ENCODE measurements at regions of chr20 and their contacts with region 1.

Region 1: GRCh38 chr20:49338061-49338460 is 60.2 kb upstream of the ZNFX1 start:
- DNase-seq: no peak
- ATAC-seq: no peak

Region 2: GRCh38 chr20:49508435-49509199 is 170.6 kb after region 1 on chr20:
- intact Hi-C with region 1: loop called (anchors 10 kb)
- DNase-seq: no peak
- ATAC-seq: no peak